OCI-LY7 (cell line): ENCODE measurements at regions of chr7 and their contacts with region 1.

Region 1: DNA sequence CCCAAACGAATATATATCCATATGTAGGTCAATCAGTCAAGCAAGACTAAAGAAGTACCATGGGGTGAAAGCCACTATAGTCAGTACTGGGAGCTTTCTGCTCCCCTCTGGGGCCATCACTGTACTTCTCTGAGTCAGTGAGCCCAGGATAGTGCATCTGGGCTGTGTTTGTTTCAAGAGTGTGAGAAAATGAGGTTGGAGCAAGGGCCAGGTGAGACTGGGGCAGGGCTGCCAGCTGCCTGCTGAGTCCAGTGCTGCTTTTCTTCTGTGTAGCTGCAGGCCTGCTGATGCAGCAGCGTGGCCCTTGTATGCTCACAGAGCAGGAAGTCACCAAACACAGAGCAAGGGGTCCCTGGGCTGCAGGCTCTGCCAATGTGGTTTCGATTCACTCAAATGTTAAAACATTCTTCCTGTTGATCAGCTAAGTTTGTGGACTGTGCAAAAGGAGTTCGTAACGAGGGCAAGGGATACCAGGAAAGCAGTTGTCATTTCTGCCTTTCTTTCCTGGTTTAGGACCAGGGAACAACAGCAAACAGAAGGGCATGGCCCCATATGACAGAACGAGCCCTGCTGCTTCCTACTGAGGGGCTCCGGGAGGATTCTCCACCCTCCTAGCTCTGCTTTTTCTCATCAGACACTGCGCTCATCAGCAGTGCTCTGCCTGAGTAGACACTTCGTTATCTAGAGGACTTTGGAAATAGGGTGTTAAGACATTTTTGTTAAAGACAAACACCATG is 65.4 kb upstream of the TNS3 start:
- DNase-seq: peak; percentile 82
- H3K4me3 ChIP-seq: no peak overlapping the region
- H3K27ac ChIP-seq: peak overlapping the region; percentile 34
- H3K4me1 ChIP-seq: peaks cover 17% of the 10 kb centered on the region
- CTCF ChIP-seq: no peak

Region 2: DNA sequence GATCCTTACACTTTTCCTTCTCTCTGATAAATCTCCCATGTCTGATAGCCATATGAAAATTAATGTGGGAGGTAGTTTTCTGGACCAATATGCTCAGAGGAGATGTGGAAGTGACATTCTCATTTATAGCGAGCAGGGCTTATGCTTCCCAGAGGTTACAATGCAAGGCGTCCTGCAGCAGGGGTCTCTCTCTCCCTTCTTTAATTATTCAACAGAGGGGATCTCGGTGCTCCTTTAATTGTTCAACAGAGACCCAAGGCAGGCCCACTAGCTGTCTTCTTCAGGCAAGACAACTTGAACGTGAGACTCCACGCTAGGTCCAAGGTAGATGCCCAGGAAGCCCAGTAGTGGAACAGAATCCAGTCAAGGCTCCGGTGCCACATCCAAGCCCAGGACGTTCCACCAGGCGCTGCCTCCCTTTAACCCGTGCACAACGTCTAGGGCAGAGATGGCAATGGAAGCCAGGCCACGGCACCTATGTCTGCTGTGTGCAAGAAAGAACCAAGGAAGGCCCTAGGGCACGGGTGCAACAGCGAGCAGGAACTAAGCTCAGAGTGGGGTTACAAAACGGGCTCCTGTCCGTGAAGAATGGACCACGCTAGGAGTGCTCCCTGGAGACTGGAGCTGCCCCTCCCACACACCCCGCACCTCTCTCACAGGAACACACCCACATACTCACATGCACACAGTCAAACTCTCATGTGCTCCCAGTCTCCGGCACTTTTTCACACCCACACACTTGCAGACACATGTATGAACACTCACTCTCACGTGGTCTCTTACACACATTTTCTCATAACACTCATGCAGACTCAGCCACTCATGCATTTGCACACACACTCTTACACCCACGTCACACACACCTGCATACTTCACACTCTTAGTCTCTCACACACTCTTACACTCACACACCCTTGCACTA is 295.9 kb before region 1 on chr7:
- CTCF ChIA-PET with region 1: no interaction called
- POLR2A ChIA-PET with region 1: no interaction called
- intact Hi-C with region 1: no loop called
- DNase-seq: peak; percentile 6
- H3K4me3 ChIP-seq: no peak overlapping the region
- H3K27ac ChIP-seq: no peak overlapping the region
- H3K4me1 ChIP-seq: no peaks in the 10 kb centered on the region
- CTCF ChIP-seq: 0 out of 2 replicates have a peak, but pooled peaks have one; percentile 28

Region 3: GRCh38 chr7:47622946-47623640 is 24.3 kb before region 1 on chr7:
- CTCF ChIA-PET with region 1: interaction called, 5 read pairs
- POLR2A ChIA-PET with region 1: interaction called, 18 read pairs
- intact Hi-C with region 1: no loop called
- DNase-seq: no peak
- H3K4me3 ChIP-seq: peak overlapping the region; percentile 46
- H3K27ac ChIP-seq: peak overlapping the region; percentile 55
- H3K4me1 ChIP-seq: peaks cover 79% of the 10 kb centered on the region
- CTCF ChIP-seq: no peak

Region 4: GRCh38 chr7:47635091-47636080 is 12.0 kb before region 1 on chr7:
- CTCF ChIA-PET with region 1: interaction called, 3 read pairs
- POLR2A ChIA-PET with region 1: interaction called, 19 read pairs
- intact Hi-C with region 1: no loop called
- DNase-seq: no peak
- H3K4me3 ChIP-seq: no peak overlapping the region
- H3K27ac ChIP-seq: no peak overlapping the region
- H3K4me1 ChIP-seq: peaks cover 27% of the 10 kb centered on the region
- CTCF ChIP-seq: no peak

Region 5: GRCh38 chr7:47661051-47661714 is 13.8 kb after region 1 on chr7:
- CTCF ChIA-PET with region 1: interaction called, 18 read pairs
- POLR2A ChIA-PET with region 1: interaction called, 11 read pairs
- intact Hi-C with region 1: no loop called
- DNase-seq: no peak
- H3K4me3 ChIP-seq: no peak overlapping the region
- H3K27ac ChIP-seq: no peak overlapping the region
- H3K4me1 ChIP-seq: peaks cover 11% of the 10 kb centered on the region
- CTCF ChIP-seq: no peak